ENCODE measurements at regions of chr7 and their contacts with region 1.

Region 1: GRCh38 chr7:80060218-80060806 is 74.3 kb upstream of the GNAI1 start:
- DNase-seq: no peak
- H3K4me3 ChIP-seq: no peak overlapping the region
- H3K27ac ChIP-seq: no peak overlapping the region
- H3K4me1 ChIP-seq: no peaks in the 10 kb centered on the region
- H3K27me3 ChIP-seq: no peaks in the 10 kb centered on the region
- CTCF ChIP-seq: peak in 2 of 3 experiments; percentile 17 to 35; a peak in 2 of 4 replicates
- EP300 ChIP-seq: no peak
- POLR2A ChIP-seq: no peak
- RAD21 ChIP-seq: peak in 1 of 2 experiments; percentile 61

Region 2: GRCh38 chr7:79868010-79868409 is 192.3 kb before region 1 on chr7:
- CTCF ChIA-PET with region 1: no interaction called
- POLR2A ChIA-PET with region 1: no interaction called
- DNase-seq: no peak
- H3K4me3 ChIP-seq: no peak overlapping the region
- H3K27ac ChIP-seq: no peak overlapping the region
- H3K4me1 ChIP-seq: no peaks in the 10 kb centered on the region
- H3K27me3 ChIP-seq: no peaks in the 10 kb centered on the region
- CTCF ChIP-seq: no peak
- EP300 ChIP-seq: no peak
- POLR2A ChIP-seq: no peak
- RAD21 ChIP-seq: no peak

Region 3: GRCh38 chr7:80039251-80039884 is 20.9 kb before region 1 on chr7:
- CTCF ChIA-PET with region 1: interaction called, 10 read pairs
- POLR2A ChIA-PET with region 1: no interaction called
- DNase-seq: no peak
- H3K4me3 ChIP-seq: no peak overlapping the region
- H3K27ac ChIP-seq: no peak overlapping the region
- H3K4me1 ChIP-seq: no peaks in the 10 kb centered on the region
- H3K27me3 ChIP-seq: no peaks in the 10 kb centered on the region
- CTCF ChIP-seq: no peak
- EP300 ChIP-seq: no peak
- POLR2A ChIP-seq: no peak
- RAD21 ChIP-seq: no peak

Region 4: GRCh38 chr7:80047856-80048459 is 12.4 kb before region 1 on chr7:
- CTCF ChIA-PET with region 1: interaction called, 21 read pairs
- POLR2A ChIA-PET with region 1: no interaction called
- DNase-seq: no peak
- H3K4me3 ChIP-seq: no peak overlapping the region
- H3K27ac ChIP-seq: no peak overlapping the region
- H3K4me1 ChIP-seq: no peaks in the 10 kb centered on the region
- H3K27me3 ChIP-seq: peaks cover 0 to 1% (median 0%) of the 10 kb centered on the region in 4 experiments; a peak in 1 of 7 replicates
- CTCF ChIP-seq: no peak
- EP300 ChIP-seq: no peak
- POLR2A ChIP-seq: no peak
- RAD21 ChIP-seq: peak in 1 of 2 experiments; percentile 16; a peak in 1 of 4 replicates

Region 5: GRCh38 chr7:80078159-80078731 is 17.9 kb after region 1 on chr7:
- CTCF ChIA-PET with region 1: interaction called, 15 read pairs
- POLR2A ChIA-PET with region 1: no interaction called
- DNase-seq: no peak
- H3K4me3 ChIP-seq: no peak overlapping the region
- H3K27ac ChIP-seq: no peak overlapping the region
- H3K4me1 ChIP-seq: no peaks in the 10 kb centered on the region
- H3K27me3 ChIP-seq: no peaks in the 10 kb centered on the region
- CTCF ChIP-seq: no peak
- EP300 ChIP-seq: no peak
- POLR2A ChIP-seq: no peak
- RAD21 ChIP-seq: no peak

Region 6: GRCh38 chr7:80095545-80095944 is 35.2 kb after region 1 on chr7:
- CTCF ChIA-PET with region 1: interaction called, 12 read pairs
- POLR2A ChIA-PET with region 1: no interaction called
- DNase-seq: no peak
- H3K4me3 ChIP-seq: no peak overlapping the region
- H3K27ac ChIP-seq: no peak overlapping the region
- H3K4me1 ChIP-seq: no peaks in the 10 kb centered on the region
- H3K27me3 ChIP-seq: no peaks in the 10 kb centered on the region
- CTCF ChIP-seq: peak in 1 of 3 experiments; percentile 2; a peak in 2 of 4 replicates
- EP300 ChIP-seq: no peak
- POLR2A ChIP-seq: no peak
- RAD21 ChIP-seq: peak; percentile 12 to 32; a peak in 1 of 4 replicates

Region 7: GRCh38 chr7:80288175-80289122 is 228.1 kb after region 1 on chr7:
- CTCF ChIA-PET with region 1: interaction called, 17 read pairs
- POLR2A ChIA-PET with region 1: no interaction called
- DNase-seq: peak in 1 of 2 experiments; percentile 5
- H3K4me3 ChIP-seq: no peak overlapping the region
- H3K27ac ChIP-seq: no peak overlapping the region
- H3K4me1 ChIP-seq: no peaks in the 10 kb centered on the region
- H3K27me3 ChIP-seq: no peaks in the 10 kb centered on the region; a peak in 1 of 7 replicates
- CTCF ChIP-seq: peak in 2 of 3 experiments; percentile 44 to 46; a peak in 3 of 4 replicates
- EP300 ChIP-seq: no peak
- POLR2A ChIP-seq: no peak
- RAD21 ChIP-seq: peak; percentile 78 to 80

Region 8: DNA sequence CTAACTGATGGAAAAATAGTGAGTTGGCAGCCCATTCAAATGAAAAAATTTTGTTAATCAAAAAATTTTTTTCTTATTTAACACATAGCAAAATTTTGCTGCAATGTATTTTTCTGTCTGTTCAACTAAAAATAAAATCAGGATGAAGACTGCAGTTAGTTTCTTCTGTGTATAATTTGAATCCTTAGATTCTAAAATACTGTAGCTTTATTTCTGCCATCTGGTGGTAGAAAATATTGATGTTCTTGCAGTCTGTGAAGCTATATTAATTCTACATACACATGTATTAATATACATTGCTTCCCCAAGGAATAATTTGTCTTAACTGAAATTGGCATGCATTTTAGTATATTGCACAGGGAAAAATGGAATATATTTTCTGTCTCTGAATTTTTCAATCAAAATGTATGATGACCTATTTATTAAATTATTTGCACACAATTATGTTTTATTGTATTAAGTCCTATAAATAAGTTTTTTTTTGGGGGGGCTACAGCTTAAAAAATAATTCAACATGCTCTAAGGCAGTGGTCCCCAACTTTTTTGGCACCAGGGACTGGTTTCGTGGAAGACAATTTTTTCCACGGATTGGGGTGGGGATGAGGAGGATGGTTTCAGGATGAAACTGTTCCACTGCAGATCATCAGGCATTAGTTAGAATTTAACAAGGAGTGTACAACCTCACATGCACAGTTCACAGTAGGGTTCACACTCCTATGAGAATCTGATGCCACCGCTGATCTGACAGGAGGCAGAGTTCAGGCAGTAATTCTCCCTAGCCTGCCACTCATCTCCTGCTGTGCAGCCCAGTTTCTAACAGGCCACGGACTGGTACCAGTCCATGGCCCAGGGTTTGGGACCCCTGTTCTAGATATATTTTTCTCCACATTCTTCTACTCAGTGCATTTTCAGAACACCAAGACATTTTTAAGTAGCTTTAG is 332.2 kb after region 1 on chr7:
- CTCF ChIA-PET with region 1: interaction called, 10 read pairs
- POLR2A ChIA-PET with region 1: no interaction called
- DNase-seq: no peak
- H3K4me3 ChIP-seq: no peak overlapping the region
- H3K27ac ChIP-seq: no peak overlapping the region
- H3K4me1 ChIP-seq: no peaks in the 10 kb centered on the region
- H3K27me3 ChIP-seq: no peaks in the 10 kb centered on the region
- CTCF ChIP-seq: peak in 1 of 3 experiments; percentile 2; a peak in 2 of 4 replicates
- EP300 ChIP-seq: no peak
- POLR2A ChIP-seq: no peak
- RAD21 ChIP-seq: no peak